Transverse colon (tissue), 4 donors: ENCODE measurements at regions of chr4 and their contacts with region 1.

Region 1: GRCh38 chr4:129641179-129641578 is 545.2 kb downstream of the C4orf33 start:
- DNase-seq: peak; percentile 61
- H3K4me3 ChIP-seq: no peak overlapping the region
- H3K27ac ChIP-seq: no peak overlapping the region
- H3K4me1 ChIP-seq: no peaks in the 10 kb centered on the region
- H3K27me3 ChIP-seq: no peaks in the 10 kb centered on the region
- CTCF ChIP-seq: peak; percentile 65 to 79 (median 75)
- EP300 ChIP-seq: no peak
- POLR2A ChIP-seq: no peak

Region 2: GRCh38 chr4:129218360-129218759 is 422.8 kb before region 1 on chr4:
- in situ Hi-C with region 1: loop called in 1 of 4 experiments (anchors 25 kb)
- intact Hi-C with region 1: no loop called
- DNase-seq: peak; percentile 8
- H3K4me3 ChIP-seq: no peak overlapping the region
- H3K27ac ChIP-seq: no peak overlapping the region
- H3K4me1 ChIP-seq: no peaks in the 10 kb centered on the region
- H3K27me3 ChIP-seq: no peaks in the 10 kb centered on the region
- CTCF ChIP-seq: peak in 2 of 5 experiments; percentile 11 to 22
- EP300 ChIP-seq: no peak
- POLR2A ChIP-seq: no peak

Region 3: DNA sequence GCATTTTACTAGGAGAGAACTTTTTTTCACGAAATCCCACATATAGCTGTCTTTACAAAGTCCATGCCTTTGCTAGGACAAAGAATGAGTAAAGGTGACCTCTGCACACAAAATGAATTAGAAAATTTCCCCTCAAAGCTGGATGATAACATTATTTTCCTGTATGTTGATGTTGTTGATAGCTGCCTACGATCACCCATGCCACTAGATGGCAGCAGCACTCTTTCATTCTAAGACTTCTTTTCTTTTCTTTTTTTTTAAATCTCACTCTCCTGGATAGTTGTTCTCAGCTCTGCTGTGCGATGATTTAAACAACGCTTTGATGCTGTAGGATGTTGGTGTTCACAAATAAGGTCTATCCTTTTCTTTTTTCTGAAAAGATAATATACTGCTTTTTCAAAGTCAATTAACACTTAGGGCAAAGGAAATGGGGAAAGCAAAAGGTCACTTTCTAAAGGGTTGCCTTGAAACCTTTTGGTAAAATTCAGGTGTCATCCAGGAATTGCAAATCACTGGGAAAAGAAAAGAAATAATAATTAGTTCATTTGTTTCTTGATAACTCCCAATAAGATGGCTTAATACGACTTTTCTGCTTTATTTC is 278.4 kb before region 1 on chr4:
- in situ Hi-C with region 1: loop called in 3 of 4 experiments (anchors 10 kb)
- intact Hi-C with region 1: loop called (anchors 2 kb)
- DNase-seq: peak; percentile 51
- H3K4me3 ChIP-seq: no peak overlapping the region
- H3K27ac ChIP-seq: no peak overlapping the region
- H3K4me1 ChIP-seq: peaks cover 0 to 8% (median 0%) of the 10 kb centered on the region in 4 donors
- H3K27me3 ChIP-seq: no peaks in the 10 kb centered on the region
- CTCF ChIP-seq: peak; percentile 62 to 83 (median 75)
- EP300 ChIP-seq: no peak
- POLR2A ChIP-seq: no peak